SK-N-SH (cell line): ENCODE measurements at regions of chr4 and their contacts with region 1.

Region 1: DNA sequence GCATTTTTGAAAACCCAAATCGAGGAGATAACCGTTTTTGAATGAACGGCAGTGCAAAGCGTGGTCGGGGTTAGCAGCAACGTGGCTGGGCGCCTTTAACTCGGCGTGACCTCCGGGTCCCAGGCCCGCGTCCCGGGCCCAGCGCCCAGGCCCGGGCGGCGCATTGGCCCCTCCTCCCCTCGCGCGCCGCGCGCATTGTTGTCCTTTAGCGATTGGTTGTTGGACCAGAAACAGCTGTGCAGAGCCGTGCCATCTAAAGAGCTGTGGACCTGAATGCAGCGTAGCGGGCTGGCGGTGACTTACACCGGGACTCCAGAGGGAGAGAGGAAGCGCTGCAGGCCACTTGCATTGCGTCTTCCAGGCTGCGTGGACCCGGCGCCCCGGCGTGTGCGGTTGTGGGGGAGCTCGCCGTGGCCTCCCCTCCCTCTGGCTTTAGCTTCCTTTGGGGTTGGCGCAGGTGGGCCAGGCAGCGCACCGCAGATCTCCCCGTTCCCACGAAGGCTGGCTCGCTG is at the start of gene STOX2:
- DNase-seq: peak; percentile 93
- H3K4me3 ChIP-seq: peak within 1 kb of the TSS; percentile 58 to 62
- H3K27ac ChIP-seq: peak within 1 kb of the TSS in 1 of 2 experiments; percentile 95; a peak in 2 of 4 replicates
- H3K4me1 ChIP-seq: peaks cover 0 to 3% of the 10 kb centered on the region in 2 experiments; a peak in 2 of 4 replicates
- H3K27me3 ChIP-seq: peaks cover 46% of the 10 kb centered on the region
- CTCF ChIP-seq: no peak
- EP300 ChIP-seq: 0 out of 4 replicates have a peak, but pooled peaks of 1 of the 2 experiments have one; percentile 39
- RAD21 ChIP-seq: peak; percentile 17; the same call in 1 of the 2 replicates
- polyA plus RNA-seq, gene STOX2: 0.16 and 0.49 TPM in 2 replicates

Region 2: GRCh38 chr4:183797445-183798300 is 107.5 kb before region 1 on chr4:
- CTCF ChIA-PET with region 1: no interaction called
- POLR2A ChIA-PET with region 1: no interaction called
- DNase-seq: peak; percentile 83
- H3K4me3 ChIP-seq: peak overlapping the region in 1 of 2 experiments; percentile 48; a peak in 2 of 4 replicates
- H3K27ac ChIP-seq: no peak overlapping the region
- H3K4me1 ChIP-seq: no peaks in the 10 kb centered on the region; a peak in 1 of 4 replicates
- H3K27me3 ChIP-seq: peaks cover 23% of the 10 kb centered on the region
- CTCF ChIP-seq: no peak
- EP300 ChIP-seq: no peak
- RAD21 ChIP-seq: no peak

Region 3: GRCh38 chr4:183876268-183876934 is 28.7 kb before region 1 on chr4:
- CTCF ChIA-PET with region 1: interaction called, 3 read pairs
- POLR2A ChIA-PET with region 1: interaction called, 11 read pairs
- DNase-seq: peak; percentile 88
- H3K4me3 ChIP-seq: peak overlapping the region; percentile 37 to 49
- H3K27ac ChIP-seq: peak overlapping the region in 1 of 2 experiments; percentile 92; a peak in 3 of 4 replicates
- H3K4me1 ChIP-seq: peaks cover 5 to 38% of the 10 kb centered on the region in 2 experiments; a peak in 1 of 4 replicates
- H3K27me3 ChIP-seq: no peaks in the 10 kb centered on the region
- CTCF ChIP-seq: no peak
- EP300 ChIP-seq: peak in 1 of 2 experiments; percentile 65; a peak in 2 of 4 replicates
- RAD21 ChIP-seq: peak; percentile 15; the same call in 1 of the 2 replicates

Region 4: DNA sequence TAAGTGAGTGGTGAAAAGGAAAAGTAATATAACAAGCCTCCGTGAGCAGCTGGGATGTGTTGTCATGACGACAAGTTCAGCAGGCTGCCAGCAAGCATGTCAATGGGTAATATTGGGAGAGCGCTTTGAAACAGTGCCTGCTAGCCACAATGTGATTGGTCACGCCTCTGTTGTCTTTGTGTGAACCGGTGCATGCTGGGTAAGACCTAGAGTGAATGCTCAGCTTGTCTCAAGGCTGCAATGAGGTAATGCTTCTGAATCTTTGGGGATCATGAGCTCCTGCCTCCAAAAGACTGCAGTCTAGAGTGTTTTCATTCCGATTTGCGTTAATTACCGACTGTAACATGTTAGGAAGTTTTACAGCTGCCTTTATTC is 54.9 kb after region 1 on chr4:
- CTCF ChIA-PET with region 1: no interaction called
- POLR2A ChIA-PET with region 1: interaction called, 12 read pairs
- DNase-seq: peak; percentile 78
- H3K4me3 ChIP-seq: peak overlapping the region; percentile 41 to 53
- H3K27ac ChIP-seq: peak overlapping the region in 1 of 2 experiments; percentile 85; a peak in 2 of 4 replicates
- H3K4me1 ChIP-seq: peaks cover 0 to 33% of the 10 kb centered on the region in 2 experiments; a peak in 2 of 4 replicates
- H3K27me3 ChIP-seq: no peaks in the 10 kb centered on the region
- CTCF ChIP-seq: no peak
- EP300 ChIP-seq: 0 out of 4 replicates have a peak, but pooled peaks of 1 of the 2 experiments have one; percentile 23
- RAD21 ChIP-seq: 0 out of 2 replicates have a peak, but pooled peaks have one; percentile 2

Region 5: DNA sequence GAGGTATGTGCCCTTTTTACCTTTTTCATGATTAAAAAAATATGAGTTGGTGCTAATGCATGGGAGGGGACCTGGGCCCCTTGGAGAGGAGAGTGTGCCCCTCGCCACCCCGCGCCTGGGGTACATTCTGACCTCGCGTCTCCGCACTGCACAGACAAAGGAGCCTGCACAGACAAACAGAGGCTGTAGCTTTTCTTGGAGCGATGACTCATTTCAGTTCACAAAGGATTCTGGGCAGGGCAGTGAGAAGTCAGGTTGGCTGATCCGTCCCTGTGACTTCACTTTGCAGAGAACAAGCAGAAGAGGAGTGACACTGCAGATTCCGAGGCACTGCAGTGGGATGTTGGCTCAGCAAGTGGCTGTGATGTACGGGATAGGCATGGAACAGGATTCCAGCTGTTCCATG is 82.9 kb after region 1 on chr4:
- CTCF ChIA-PET with region 1: no interaction called
- POLR2A ChIA-PET with region 1: interaction called, 15 read pairs
- DNase-seq: peak; percentile 54
- H3K4me3 ChIP-seq: peak overlapping the region; percentile 40 to 60
- H3K27ac ChIP-seq: peak overlapping the region; percentile 67 to 75
- H3K4me1 ChIP-seq: peaks cover 5 to 33% of the 10 kb centered on the region in 2 experiments; a peak in 3 of 4 replicates
- H3K27me3 ChIP-seq: no peaks in the 10 kb centered on the region
- CTCF ChIP-seq: no peak
- EP300 ChIP-seq: no peak; a peak in 1 of 4 replicates
- RAD21 ChIP-seq: no peak

Region 6: GRCh38 chr4:184553896-184554295 is 648.8 kb after region 1 on chr4:
- CTCF ChIA-PET with region 1: no interaction called
- POLR2A ChIA-PET with region 1: no interaction called
- DNase-seq: no peak
- H3K4me3 ChIP-seq: no peak overlapping the region
- H3K27ac ChIP-seq: no peak overlapping the region
- H3K4me1 ChIP-seq: no peaks in the 10 kb centered on the region; a peak in 1 of 4 replicates
- H3K27me3 ChIP-seq: no peaks in the 10 kb centered on the region
- CTCF ChIP-seq: no peak
- EP300 ChIP-seq: no peak
- RAD21 ChIP-seq: no peak